ENCODE measurements at regions of chr2 and their contacts with region 1.

Region 1: DNA sequence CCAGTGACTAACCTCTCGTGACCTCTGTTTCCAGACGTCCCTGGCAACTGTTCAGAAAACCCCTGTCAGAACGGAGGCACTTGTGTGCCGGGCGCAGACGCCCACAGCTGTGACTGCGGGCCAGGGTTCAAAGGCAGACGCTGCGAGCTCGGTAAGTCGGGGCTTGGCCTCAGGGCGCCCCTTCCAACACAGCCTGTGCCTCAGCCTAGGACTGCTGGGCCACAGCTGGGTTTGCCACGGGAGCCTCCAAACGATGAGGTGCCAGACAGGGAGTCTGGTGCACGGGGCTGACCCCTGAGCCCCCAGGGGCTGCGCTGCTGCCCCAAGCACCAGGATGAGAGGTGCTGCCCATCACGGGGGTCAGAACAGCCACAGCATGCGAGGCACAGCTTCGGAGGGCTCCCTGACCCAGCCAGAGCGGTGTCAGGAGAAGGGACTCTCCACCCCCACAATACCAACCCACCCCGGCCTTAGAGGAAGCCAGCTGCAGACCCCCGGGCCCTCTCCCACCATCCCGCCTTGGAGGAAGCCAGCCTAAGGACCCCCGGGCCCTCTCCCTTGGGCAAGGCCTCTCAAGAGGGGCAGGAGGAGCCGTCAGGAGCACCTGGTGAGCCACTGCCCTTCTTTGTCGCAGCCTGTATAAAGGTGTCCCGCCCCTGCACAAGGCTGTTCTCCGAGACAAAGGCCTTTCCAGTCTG is 20.3 kb downstream of the MTERF4 start:
- DNase-seq: no peak
- H3K4me3 ChIP-seq: no peak overlapping the region
- H3K27me3 ChIP-seq: no peaks in the 10 kb centered on the region
- CTCF ChIP-seq: no peak

Region 2: GRCh38 chr2:241061275-241061674 is 20.5 kb before region 1 on chr2:
- CTCF ChIA-PET with region 1: interaction called, 13 read pairs
- POLR2A ChIA-PET with region 1: no interaction called
- DNase-seq: no peak
- H3K4me3 ChIP-seq: no peak overlapping the region
- H3K27me3 ChIP-seq: no peaks in the 10 kb centered on the region
- CTCF ChIP-seq: no peak

Region 3: DNA sequence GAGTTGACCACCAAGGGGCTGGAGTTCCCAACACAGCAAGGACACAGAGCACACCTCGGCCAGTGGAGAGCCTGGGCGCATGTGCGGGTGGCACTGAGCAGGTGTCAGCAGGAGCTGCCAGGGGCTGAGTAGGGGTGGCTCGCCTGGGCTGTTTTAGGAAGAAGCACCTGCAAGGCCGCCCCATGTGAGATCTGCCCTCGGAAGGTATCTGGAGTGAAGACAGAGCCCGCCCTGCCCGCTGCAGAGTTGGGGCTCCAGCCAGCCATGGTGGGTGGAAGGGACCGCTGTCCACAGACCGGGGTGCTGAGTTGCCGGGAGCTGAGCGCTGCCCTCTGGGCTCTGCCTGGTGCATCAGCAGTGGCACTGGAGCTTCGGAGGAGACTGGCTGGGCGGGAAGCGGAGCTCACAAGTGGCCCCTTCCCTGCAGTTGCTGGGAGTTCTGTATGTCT is 14.9 kb before region 1 on chr2:
- CTCF ChIA-PET with region 1: interaction called, 13 read pairs
- POLR2A ChIA-PET with region 1: no interaction called
- DNase-seq: no peak
- H3K4me3 ChIP-seq: no peak overlapping the region
- H3K27me3 ChIP-seq: no peaks in the 10 kb centered on the region
- CTCF ChIP-seq: 0 out of 2 replicates have a peak, but pooled peaks have one; percentile 8

Region 4: DNA sequence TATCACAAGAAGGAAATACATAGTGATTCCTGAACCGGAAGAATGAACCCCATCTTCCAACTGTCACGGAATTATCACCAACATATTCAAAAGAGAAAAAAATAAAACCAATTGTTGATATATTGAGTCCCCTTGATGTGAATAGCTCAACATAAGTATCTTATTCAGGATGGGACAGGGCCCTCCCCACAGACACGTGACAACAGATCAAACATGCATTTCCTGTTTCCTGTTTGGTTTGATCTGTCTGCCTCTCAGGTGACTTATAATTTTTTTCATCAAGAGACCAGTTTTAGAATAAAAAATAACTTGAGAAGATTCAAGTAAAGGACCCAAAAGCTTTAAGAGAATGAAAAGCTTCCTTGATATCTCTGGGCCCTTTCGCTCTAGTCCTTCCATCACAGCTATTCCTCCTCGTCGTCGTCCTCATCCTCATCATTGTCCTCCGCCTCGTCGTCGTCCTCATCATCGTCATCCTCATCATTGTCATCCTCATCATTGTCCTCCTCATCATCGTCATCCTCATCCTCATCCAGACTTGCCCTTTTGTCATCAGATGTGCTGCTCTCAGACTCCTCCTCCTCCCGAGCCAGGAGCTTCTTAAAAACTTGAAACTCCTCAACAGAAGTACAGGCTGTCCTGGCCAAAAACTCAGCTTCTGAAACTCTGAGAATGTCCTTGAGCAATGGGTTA is 13.9 kb after region 1 on chr2:
- CTCF ChIA-PET with region 1: interaction called, 20 read pairs
- POLR2A ChIA-PET with region 1: no interaction called
- DNase-seq: no peak
- H3K4me3 ChIP-seq: no peak overlapping the region
- H3K27me3 ChIP-seq: no peaks in the 10 kb centered on the region
- CTCF ChIP-seq: no peak

Region 5: DNA sequence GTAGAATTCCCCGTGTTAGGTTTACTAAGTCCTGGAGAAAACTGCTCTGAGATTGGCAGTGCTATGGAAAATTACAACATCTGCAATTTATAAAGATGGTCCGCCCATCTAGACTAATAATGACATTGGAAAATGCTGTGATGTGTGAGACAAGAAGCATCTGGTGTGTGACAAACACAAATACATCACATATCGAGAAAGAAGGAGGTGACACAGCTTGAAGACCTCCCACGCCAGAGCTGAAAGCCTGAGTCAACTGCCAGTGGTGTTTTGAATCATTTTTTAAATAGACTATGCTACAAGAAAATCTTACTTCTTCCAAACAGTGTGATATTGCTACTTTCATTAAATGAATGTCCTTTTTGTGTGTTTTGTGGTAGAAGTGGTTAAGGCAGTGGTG is 98.1 kb after region 1 on chr2:
- CTCF ChIA-PET with region 1: no interaction called
- POLR2A ChIA-PET with region 1: no interaction called
- DNase-seq: no peak
- H3K4me3 ChIP-seq: no peak overlapping the region
- H3K27me3 ChIP-seq: no peaks in the 10 kb centered on the region
- CTCF ChIP-seq: no peak